Transverse colon (tissue), 4 donors: ENCODE measurements at regions of chr9 and their contacts with region 1.

Region 1: DNA sequence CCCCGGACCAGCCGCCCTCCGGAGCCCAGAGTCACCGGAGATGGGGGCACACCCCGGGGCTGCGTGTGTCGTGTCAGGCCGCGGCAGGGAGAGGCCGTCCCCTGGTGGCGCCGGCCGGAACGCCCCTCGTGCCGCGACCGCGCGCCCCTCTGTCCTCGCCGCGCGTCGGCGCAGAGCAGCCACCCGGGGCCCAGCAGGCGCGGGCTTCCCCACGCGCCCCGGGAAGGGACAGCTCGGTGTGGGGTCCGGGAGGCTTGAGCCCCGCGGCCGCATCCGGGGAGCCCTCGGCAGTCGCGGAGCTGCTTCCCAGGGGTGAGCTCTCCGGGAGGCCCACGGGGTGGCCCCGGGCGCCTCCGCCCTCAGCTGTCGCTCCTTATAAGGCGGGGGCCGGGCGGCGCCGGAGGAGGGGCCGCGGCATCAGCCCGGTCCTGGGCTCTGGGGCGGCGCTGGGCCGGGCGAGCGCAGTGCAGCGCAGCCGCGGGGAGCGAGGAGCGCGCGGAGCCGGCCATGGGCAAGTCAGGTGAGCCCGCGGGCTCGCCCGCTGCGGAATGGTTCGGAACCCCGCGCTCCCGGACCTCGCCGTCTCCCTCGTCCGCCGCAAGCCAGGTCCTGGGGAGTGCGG is at the start of gene GLIPR2:
- DNase-seq: peak; percentile 87
- H3K4me3 ChIP-seq: peak within 1 kb of the TSS; percentile 49 to 97 (median 86)
- H3K27ac ChIP-seq: peak within 1 kb of the TSS; percentile 86 to 95 (median 88)
- H3K4me1 ChIP-seq: peaks cover 8 to 50% (median 43%) of the 10 kb centered on the region in 4 donors
- H3K27me3 ChIP-seq: no peaks in the 10 kb centered on the region
- CTCF ChIP-seq: peak in 4 of 5 experiments; percentile 18 to 39 (median 30)
- EP300 ChIP-seq: no peak
- POLR2A ChIP-seq: peak; percentile 65
- total RNA-seq, gene GLIPR2: 9.7 to 40.4 (median 26.7) TPM

Region 2: GRCh38 chr9:35903049-35903448 is 233.3 kb before region 1 on chr9:
- in situ Hi-C with region 1: no loop called
- intact Hi-C with region 1: no loop called
- DNase-seq: no peak
- H3K4me3 ChIP-seq: no peak overlapping the region
- H3K27ac ChIP-seq: no peak overlapping the region
- H3K4me1 ChIP-seq: peaks cover 33 to 63% (median 41%) of the 10 kb centered on the region in 4 donors
- H3K27me3 ChIP-seq: no peaks in the 10 kb centered on the region
- CTCF ChIP-seq: peak; percentile 69 to 86 (median 76)
- EP300 ChIP-seq: no peak
- POLR2A ChIP-seq: no peak

Region 3: GRCh38 chr9:36102742-36103495 is 33.5 kb before region 1 on chr9:
- in situ Hi-C with region 1: no loop called
- intact Hi-C with region 1: loop called (anchors 5 kb)
- DNase-seq: peak; percentile 90
- H3K4me3 ChIP-seq: no peak overlapping the region
- H3K27ac ChIP-seq: peak overlapping the region in 2 of 4 donors; percentile 10 to 19
- H3K4me1 ChIP-seq: peaks cover 0 to 11% (median 6%) of the 10 kb centered on the region in 4 donors
- H3K27me3 ChIP-seq: no peaks in the 10 kb centered on the region
- CTCF ChIP-seq: peak; percentile 80 to 91 (median 84)
- EP300 ChIP-seq: no peak
- POLR2A ChIP-seq: no peak